Activated naive CD4-positive, alpha-beta T cell treated with anti-CD3 and anti-CD28 coated beads for 36 hours (primary cell): ENCODE measurements at regions of chr16 and their contacts with region 1.

Region 1: GRCh38 chr16:3188925-3189825 is 1.2 kb downstream of the OR1F1 start:
- DNase-seq: peak; percentile 76
- H3K4me3 Mint-ChIP-seq: peak overlapping the region; percentile 79
- H3K27ac Mint-ChIP-seq: peak overlapping the region; percentile 84
- H3K4me1 Mint-ChIP-seq: peaks cover 46% of the 10 kb centered on the region
- H3K27me3 Mint-ChIP-seq: peaks cover 73% of the 10 kb centered on the region

Region 2: DNA sequence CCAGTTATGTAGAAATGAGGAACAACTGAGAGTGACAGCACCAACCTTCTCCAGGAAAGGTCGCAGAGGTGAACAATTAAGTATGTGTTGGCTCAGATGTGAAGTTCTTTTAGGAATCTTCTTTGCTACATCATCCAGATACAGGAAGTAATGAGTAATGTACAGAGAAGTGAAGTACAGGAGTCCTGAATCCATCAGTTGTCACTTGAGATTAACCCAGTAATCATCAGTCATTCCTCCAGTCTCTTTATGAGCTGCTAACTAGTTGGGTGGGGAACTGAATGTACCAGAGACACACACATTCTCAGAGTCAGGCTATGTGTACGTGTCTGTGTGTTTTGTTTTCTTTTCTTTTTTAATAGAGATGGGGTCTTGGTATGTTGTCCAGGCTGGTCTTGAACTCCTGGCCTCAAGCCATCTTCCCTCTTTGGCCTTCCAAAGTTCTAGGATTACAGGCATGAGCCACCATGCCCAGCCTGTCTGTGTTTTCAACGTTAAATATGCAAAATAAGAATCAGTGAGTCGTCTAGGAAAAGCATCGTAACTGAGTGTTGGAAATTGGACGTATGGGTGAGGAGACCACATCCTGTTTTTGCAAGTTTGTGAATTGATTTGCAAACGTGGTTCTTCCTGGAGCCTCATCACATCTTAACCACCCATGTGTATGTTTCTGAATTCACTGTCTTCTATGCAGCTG is 25.9 kb after region 1 on chr16:
- CTCF ChIA-PET with region 1: no interaction called
- intact Hi-C with region 1: loop called (anchors 1 kb)
- DNase-seq: peak; percentile 76
- H3K4me3 Mint-ChIP-seq: peak overlapping the region; percentile 54
- H3K27ac Mint-ChIP-seq: peak overlapping the region; percentile 96
- H3K4me1 Mint-ChIP-seq: peaks cover 31% of the 10 kb centered on the region
- H3K27me3 Mint-ChIP-seq: no peaks in the 10 kb centered on the region

Region 3: DNA sequence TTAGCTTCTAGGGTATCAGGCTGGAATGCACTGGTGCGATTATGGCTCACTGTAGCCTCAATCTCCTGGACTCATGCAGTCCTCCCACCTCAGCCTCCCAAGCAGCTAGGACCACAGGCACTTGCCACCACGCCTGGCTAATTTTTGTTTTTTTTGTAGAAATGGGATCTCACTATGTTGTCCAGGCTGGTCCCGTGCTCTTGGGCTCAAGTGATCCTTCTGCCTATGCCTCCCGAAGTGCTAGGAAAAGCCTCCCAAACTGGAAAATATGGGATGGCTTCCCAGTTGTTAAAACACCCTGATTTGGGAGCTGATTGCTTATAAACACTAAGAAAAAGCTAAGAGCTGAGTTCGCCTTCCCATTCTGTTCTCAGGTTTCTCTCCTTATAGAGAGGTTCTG is 87.5 kb after region 1 on chr16:
- CTCF ChIA-PET with region 1: no interaction called
- intact Hi-C with region 1: no loop called
- DNase-seq: no peak
- H3K4me3 Mint-ChIP-seq: no peak overlapping the region
- H3K27ac Mint-ChIP-seq: no peak overlapping the region
- H3K4me1 Mint-ChIP-seq: no peaks in the 10 kb centered on the region
- H3K27me3 Mint-ChIP-seq: no peaks in the 10 kb centered on the region